ENCODE measurements at regions of chr14 and their contacts with region 1.

Region 1: DNA sequence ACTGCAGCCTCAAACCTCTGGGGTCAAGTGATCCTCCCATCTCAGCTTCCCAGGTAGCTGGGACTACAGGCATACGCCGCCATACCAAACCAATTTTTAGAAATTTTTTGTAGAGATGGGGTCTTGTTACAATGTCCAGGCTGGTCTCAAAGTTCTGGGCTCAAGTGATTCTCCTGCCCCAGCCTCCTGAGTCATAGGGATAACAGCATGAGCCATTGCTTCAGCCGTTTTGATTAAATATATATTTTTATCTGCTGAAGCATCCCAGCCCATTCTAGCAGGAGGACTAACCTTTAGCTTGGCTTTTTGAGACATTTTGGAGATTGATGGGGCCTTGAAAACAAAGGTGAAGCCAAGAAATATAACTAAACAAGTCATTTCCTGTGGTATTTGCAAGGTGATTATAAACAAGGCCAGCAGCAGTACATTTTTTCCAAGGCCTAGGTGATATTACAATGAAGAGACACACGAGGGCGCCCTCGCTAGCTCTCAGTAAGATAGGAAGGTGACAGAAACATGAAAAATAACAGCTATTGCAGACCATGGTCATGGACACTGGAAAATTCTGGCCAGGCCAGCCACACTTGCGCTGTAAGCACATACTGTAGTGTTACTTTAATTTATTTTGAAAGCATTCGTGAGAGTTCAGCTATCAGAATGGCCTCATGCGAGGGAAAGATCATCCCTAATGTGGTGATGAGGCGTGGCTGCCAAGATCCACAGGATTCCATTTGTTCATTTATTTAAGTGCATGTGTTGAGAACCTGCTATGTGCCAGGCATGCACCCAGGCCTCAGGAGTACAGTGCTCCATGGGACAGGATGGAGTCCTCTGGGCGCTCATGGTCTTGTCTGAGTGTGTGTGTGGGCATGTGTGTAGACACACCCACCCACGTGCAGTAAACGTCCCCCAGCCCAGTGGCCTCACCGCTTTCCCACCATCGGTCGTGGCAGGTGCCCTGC is 63.5 kb downstream of the DGLUCY start:
- DNase-seq: peak; percentile 80
- H3K4me3 Mint-ChIP-seq: no peak overlapping the region
- H3K27ac Mint-ChIP-seq: peak overlapping the region; percentile 84
- H3K4me1 Mint-ChIP-seq: peaks cover 14% of the 10 kb centered on the region
- H3K27me3 Mint-ChIP-seq: no peaks in the 10 kb centered on the region

Region 2: GRCh38 chr14:90894241-90894640 is 283.1 kb before region 1 on chr14:
- CTCF ChIA-PET with region 1: interaction called, 11 read pairs
- POLR2A ChIA-PET with region 1: no interaction called
- intact Hi-C with region 1: no loop called
- DNase-seq: no peak
- H3K4me3 Mint-ChIP-seq: no peak overlapping the region
- H3K27ac Mint-ChIP-seq: no peak overlapping the region
- H3K4me1 Mint-ChIP-seq: no peaks in the 10 kb centered on the region
- H3K27me3 Mint-ChIP-seq: no peaks in the 10 kb centered on the region

Region 3: DNA sequence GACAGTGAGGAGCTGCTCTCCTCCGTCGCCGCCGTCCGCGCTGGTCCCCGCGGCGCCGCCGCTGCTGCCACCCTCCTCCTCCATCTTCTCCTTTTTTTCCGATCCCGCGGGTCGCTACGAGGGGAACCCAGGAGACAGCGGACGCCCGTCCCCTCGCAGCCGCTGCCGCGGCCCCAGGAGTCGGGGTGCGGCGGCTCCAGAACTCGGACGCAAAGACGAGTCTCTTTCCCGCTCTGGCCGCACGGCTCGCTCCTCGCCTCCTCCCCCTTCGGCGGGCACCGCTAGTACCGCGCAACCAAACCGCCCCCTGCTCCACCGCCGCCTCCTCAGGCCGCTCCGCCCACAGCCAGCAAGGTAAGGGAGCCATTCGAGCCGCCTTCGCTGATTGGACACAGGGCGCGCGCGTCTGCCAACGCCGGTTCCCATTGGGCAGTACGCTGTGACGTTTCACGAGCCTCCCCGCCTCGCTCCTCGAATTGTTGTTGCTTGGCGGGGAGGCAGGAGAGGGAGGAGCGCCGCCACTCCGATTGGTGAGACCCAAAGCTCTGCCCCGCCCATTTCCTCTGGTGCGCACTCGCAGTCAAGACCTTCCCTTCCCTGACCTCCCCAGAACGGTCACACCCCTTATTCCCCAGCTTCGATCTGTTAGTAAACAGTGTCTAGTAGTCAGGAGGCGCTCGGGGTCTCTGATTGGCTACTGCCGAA is 116.9 kb before region 1 on chr14 and contains the start of gene RPS6KA5:
- CTCF ChIA-PET with region 1: interaction called, 21 read pairs
- POLR2A ChIA-PET with region 1: interaction called, 3 read pairs
- intact Hi-C with region 1: no loop called
- DNase-seq: peak; percentile 100
- H3K4me3 Mint-ChIP-seq: peak within 1 kb of the TSS; percentile 87
- H3K27ac Mint-ChIP-seq: peak within 1 kb of the TSS; percentile 61
- H3K4me1 Mint-ChIP-seq: peaks cover 57% of the 10 kb centered on the region
- H3K27me3 Mint-ChIP-seq: no peaks in the 10 kb centered on the region
- total RNA-seq, gene RPS6KA5: 18.8 to 19.3 TPM

Region 4: GRCh38 chr14:91138511-91139359 is 38.6 kb before region 1 on chr14:
- CTCF ChIA-PET with region 1: interaction called, 19 read pairs
- POLR2A ChIA-PET with region 1: no interaction called
- intact Hi-C with region 1: loop called (anchors 5 kb)
- DNase-seq: peak; percentile 74
- H3K4me3 Mint-ChIP-seq: no peak overlapping the region
- H3K27ac Mint-ChIP-seq: peak overlapping the region; percentile 77
- H3K4me1 Mint-ChIP-seq: peaks cover 51% of the 10 kb centered on the region
- H3K27me3 Mint-ChIP-seq: no peaks in the 10 kb centered on the region

Region 5: GRCh38 chr14:91202234-91202974 is 25.1 kb after region 1 on chr14:
- CTCF ChIA-PET with region 1: interaction called, 15 read pairs
- POLR2A ChIA-PET with region 1: no interaction called
- intact Hi-C with region 1: no loop called
- DNase-seq: peak; percentile 31
- H3K4me3 Mint-ChIP-seq: no peak overlapping the region
- H3K27ac Mint-ChIP-seq: peak overlapping the region; percentile 39
- H3K4me1 Mint-ChIP-seq: peaks cover 33% of the 10 kb centered on the region
- H3K27me3 Mint-ChIP-seq: no peaks in the 10 kb centered on the region

Region 6: DNA sequence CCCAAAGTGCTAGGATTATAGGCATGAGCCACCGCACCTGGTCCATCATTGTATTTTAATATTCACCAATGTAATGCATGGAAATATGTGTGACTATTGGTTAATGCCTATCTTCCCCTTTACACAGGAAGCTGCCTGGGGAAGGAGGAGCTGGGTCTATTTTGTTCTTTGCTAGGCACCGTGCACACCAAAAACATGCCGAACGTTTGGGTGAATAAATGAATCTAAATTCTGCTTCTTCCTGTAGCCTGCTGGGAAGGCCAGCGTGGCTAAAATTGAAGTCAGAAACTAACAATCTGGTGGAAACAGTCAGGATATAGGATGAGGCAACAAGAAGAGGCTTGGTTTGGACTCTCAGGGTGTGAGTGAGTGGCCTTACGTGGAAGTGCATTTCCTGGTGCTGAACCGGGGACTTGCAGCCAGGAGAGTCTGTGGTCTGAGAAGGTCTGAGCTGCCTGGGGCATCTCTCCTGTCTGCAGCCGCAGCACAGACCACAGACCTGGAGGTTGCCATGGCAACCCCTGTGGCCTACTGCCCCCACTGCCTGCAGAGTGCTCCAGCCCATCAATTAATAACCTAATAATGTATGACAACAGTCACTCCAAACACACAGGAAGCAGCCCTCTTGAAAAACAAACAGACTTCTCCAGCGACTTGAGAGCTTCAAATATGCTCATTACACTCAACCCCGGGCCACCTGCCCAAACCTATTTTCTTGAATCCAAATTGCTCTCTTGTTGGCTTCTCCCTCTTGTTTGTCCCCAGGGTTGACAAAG is 72.7 kb after region 1 on chr14:
- CTCF ChIA-PET with region 1: interaction called, 39 read pairs
- POLR2A ChIA-PET with region 1: interaction called, 4 read pairs
- intact Hi-C with region 1: loop called (anchors 1 kb)
- DNase-seq: peak; percentile 67
- H3K4me3 Mint-ChIP-seq: peak overlapping the region; percentile 36
- H3K27ac Mint-ChIP-seq: peak overlapping the region; percentile 92
- H3K4me1 Mint-ChIP-seq: peaks cover 85% of the 10 kb centered on the region
- H3K27me3 Mint-ChIP-seq: no peaks in the 10 kb centered on the region

Region 7: GRCh38 chr14:91286530-91286937 is 109.2 kb after region 1 on chr14:
- CTCF ChIA-PET with region 1: interaction called, 354 read pairs
- POLR2A ChIA-PET with region 1: interaction called, 3 read pairs
- intact Hi-C with region 1: loop called (anchors 1 kb)
- DNase-seq: peak; percentile 87
- H3K4me3 Mint-ChIP-seq: no peak overlapping the region
- H3K27ac Mint-ChIP-seq: peak overlapping the region; percentile 57
- H3K4me1 Mint-ChIP-seq: peaks cover 5% of the 10 kb centered on the region
- H3K27me3 Mint-ChIP-seq: no peaks in the 10 kb centered on the region

Measured in activated CD4-positive, alpha-beta memory T cell treated with anti-CD3 and anti-CD28 coated beads for 36 hours (primary cell).